ENCODE measurements at regions of chr20 and their contacts with region 1.

Region 1: GRCh38 chr20:46013826-46014516 is 5.3 kb downstream of the MMP9 start:
- DNase-seq: peak; percentile 73
- H3K4me3 Mint-ChIP-seq: peak overlapping the region; percentile 30
- H3K27ac Mint-ChIP-seq: no peak overlapping the region
- H3K4me1 Mint-ChIP-seq: peaks cover 56% of the 10 kb centered on the region
- H3K27me3 Mint-ChIP-seq: peaks cover 68% of the 10 kb centered on the region

Region 2: DNA sequence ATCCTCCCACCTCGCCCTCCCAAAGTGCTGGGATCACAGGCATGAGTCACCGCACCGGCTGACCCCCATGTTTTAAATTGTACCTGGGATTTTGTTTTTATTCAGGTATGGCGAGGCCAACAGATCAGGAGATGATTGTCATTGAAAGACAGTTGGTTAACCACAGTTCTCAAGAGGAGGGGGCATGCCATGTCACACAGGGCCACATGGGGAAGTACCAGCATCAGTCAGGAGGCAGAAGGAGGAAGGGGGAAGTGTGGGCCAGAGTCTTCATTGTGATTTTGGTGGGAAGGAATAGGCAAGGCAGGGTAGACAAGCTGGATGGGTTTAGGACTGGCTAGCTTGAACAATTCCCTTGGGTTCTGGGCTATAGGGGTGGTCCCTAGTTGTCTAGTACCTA is 15.2 kb before region 1 on chr20:
- CTCF ChIA-PET with region 1: interaction called, 26 read pairs
- POLR2A ChIA-PET with region 1: interaction called, 3 read pairs
- DNase-seq: no peak
- H3K4me3 Mint-ChIP-seq: no peak overlapping the region
- H3K27ac Mint-ChIP-seq: no peak overlapping the region
- H3K4me1 Mint-ChIP-seq: peaks cover 51% of the 10 kb centered on the region
- H3K27me3 Mint-ChIP-seq: peaks cover 17% of the 10 kb centered on the region

Region 3: DNA sequence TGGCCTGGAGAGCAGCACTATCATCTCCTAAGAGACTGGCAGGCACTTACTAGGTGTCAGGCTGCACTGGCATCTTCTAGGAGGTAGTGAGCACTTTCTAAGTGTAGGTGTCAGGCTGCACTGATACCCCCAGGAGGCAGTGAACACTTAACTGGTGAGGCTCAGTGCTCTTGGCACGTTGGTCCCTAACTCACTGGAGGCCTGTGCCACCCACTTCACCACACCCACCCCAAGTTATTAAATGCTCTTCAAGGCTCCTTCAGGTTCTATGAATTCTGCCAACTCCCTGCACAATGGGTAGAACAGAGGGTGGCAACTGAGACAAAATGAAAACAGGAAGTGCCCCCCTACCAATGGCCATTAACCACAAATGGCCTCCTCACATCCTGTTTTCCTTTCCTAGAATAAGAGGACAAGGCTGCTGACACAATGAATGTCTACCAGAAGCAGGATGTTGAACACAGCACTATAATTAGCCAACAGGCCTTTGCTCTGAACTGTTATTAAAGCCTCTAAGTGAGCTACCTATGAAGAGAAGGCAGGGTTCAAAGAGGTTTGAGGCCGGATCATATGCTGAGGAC is 46.4 kb after region 1 on chr20:
- CTCF ChIA-PET with region 1: interaction called, 10 read pairs
- POLR2A ChIA-PET with region 1: no interaction called
- DNase-seq: peak; percentile 48
- H3K4me3 Mint-ChIP-seq: no peak overlapping the region
- H3K27ac Mint-ChIP-seq: peak overlapping the region; percentile 82
- H3K4me1 Mint-ChIP-seq: peaks cover 59% of the 10 kb centered on the region
- H3K27me3 Mint-ChIP-seq: peaks cover 29% of the 10 kb centered on the region

Region 4: DNA sequence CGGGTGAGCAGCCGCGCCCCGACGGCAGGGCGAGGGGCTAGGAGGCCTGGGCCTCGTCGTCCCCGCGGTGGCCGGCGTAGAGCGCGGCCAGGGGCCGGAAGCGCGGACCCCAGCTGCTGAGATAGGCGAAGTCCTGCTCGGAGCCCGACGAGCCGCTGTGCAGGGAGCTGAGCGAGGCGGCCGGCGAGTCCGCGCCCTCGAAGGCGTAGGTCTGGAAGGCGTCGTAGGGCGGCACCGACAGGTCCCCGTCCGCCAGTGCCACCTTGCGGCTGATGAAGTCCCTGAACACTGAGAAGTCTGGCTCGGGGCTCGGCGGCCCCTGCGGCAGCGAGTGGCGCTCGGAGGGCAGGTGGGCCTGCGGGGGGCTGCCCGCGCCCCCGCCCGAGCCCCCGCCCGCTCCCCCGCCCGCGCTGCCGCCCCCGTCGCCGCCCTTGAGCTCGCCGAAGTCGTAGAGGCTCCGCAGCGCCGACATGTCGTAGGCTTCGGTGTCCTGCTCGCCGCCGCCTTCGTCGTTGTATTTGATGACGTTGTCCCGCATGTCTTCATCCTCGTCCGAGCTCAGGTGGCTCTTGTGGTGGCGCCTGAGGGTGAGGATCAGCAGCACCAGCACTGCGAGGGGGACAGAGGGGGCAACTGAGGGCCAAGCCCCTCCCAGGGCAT is 160.6 kb after region 1 on chr20:
- CTCF ChIA-PET with region 1: interaction called, 12 read pairs
- POLR2A ChIA-PET with region 1: no interaction called
- DNase-seq: peak; percentile 70
- H3K4me3 Mint-ChIP-seq: no peak overlapping the region
- H3K27ac Mint-ChIP-seq: no peak overlapping the region
- H3K4me1 Mint-ChIP-seq: no peaks in the 10 kb centered on the region
- H3K27me3 Mint-ChIP-seq: peaks cover 44% of the 10 kb centered on the region

Measured in activated CD4-positive, alpha-beta memory T cell treated with anti-CD3 and anti-CD28 coated beads, Interleukin-2, amount 10 ng/mL, durations not matched to agents 7 days and 5 days (primary cell).